Activated naive CD4-positive, alpha-beta T cell treated with anti-CD3 and anti-CD28 coated beads for 36 hours (primary cell): ENCODE measurements at regions of chr19 and their contacts with region 1.

Region 1: GRCh38 chr19:39212375-39212742 is 8.3 kb upstream of the SYCN start:
- DNase-seq: peak; percentile 84
- H3K4me3 Mint-ChIP-seq: no peak overlapping the region
- H3K27ac Mint-ChIP-seq: no peak overlapping the region
- H3K4me1 Mint-ChIP-seq: no peaks in the 10 kb centered on the region
- H3K27me3 Mint-ChIP-seq: peaks cover 2% of the 10 kb centered on the region

Region 2: GRCh38 chr19:39328046-39328705 is 115.8 kb after region 1 on chr19:
- CTCF ChIA-PET with region 1: interaction called, 13 read pairs
- intact Hi-C with region 1: loop called (anchors 2 kb)
- DNase-seq: peak; percentile 89
- H3K4me3 Mint-ChIP-seq: no peak overlapping the region
- H3K27ac Mint-ChIP-seq: peak overlapping the region; percentile 50
- H3K4me1 Mint-ChIP-seq: peaks cover 42% of the 10 kb centered on the region
- H3K27me3 Mint-ChIP-seq: no peaks in the 10 kb centered on the region

Region 3: DNA sequence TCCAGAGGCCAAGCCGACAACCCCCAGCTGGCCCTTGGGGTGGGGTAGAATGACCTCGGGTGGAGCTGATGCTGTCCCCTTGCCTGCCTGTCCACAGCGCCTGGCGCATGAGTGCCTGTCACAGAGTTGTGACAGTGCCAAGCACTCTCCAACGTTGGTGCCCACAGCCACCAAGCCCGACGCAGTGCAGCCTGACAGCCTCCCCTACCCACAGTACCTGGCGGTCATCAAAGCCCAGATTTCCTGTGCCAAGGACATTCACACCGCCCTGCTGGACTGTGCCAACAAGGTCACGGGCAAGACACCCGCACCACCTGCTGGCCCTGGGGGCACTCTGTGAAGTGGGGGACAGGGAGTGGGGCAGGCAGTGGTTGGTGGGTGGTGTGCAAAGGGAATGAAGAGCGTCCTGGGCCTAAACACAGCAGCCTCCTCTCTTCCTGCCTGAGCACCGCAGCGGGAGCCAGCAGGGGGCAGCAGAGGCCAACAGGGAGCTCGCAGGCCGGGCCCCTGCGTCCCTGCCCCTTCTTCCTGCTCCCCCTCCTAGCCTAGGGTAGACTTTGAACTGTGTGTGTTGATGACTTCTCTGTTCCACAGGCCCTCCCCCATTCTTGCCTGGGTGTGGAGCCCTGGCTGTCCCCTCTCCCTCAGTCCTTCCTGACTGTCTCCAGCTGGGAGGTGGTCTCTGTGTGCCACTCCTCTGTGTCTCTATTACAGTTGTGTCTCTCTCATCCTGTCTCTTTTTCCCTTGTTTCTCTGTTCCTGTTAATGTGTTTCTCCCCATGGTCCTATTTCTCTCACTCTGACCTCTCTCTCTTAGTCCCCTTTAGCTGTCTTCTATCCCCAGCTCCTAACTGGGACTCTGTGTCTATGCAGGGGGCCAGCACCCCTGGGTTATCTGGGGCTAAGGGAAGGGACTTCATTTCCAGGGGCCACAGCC is 185.3 kb after region 1 on chr19:
- CTCF ChIA-PET with region 1: interaction called, 3 read pairs
- intact Hi-C with region 1: loop called (anchors 1 kb)
- DNase-seq: peak; percentile 96
- H3K4me3 Mint-ChIP-seq: peak overlapping the region; percentile 34
- H3K27ac Mint-ChIP-seq: peak overlapping the region; percentile 91
- H3K4me1 Mint-ChIP-seq: peaks cover 63% of the 10 kb centered on the region
- H3K27me3 Mint-ChIP-seq: no peaks in the 10 kb centered on the region